CD8-positive, alpha-beta T cell (primary cell): ENCODE measurements at regions of chr6 and their contacts with region 1.

Region 1: DNA sequence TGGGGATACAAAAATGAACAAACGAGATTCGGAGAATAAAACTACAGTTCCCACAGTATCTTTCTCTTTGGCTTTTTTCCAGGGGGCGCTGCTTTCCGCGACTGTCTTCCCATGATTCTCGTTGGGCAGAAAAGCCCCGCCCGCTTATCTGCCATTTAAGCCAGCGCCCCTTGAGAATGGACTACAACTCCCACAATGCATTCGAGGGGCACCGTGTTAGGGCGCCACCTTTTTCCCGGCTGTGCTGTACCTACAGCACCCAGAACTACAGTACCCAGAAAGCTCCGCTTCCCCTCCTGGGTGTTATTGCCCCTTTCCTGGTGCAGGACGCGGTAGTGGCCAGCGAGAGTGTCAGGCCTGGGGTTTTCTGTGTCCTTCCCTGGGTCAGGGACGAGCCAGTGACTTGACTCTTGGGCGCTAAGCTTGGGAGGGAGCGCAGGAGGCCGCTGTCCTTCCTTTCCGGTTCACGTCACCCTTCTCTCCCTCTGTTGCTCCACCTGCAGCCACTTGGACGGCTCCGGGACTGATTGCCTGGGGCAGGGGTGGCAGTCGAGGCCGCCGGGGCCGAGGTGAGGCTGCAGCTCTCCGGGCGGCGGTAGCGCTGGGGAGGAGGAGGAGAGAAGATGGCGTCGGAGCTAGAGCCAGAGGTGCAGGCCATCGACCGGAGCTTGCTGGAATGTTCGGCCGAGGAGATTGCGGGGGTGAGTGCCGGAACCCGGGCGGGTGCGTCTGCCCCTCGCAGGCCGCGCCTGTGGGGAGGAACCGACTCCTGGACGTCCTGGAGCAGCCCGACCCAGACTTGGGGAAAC is at the start of gene UBR2:
- DNase-seq: peak; percentile 82 to 98 (median 91)
- ATAC-seq: peak; percentile 95
- H3K4me3 ChIP-seq: peak within 1 kb of the TSS; percentile 95 to 99
- H3K4me3 Mint-ChIP-seq: peak within 1 kb of the TSS; percentile 93
- H3K27ac ChIP-seq: peak within 1 kb of the TSS; percentile 91 to 96
- H3K27ac Mint-ChIP-seq: peak within 1 kb of the TSS; percentile 94
- H3K4me1 ChIP-seq: peaks cover 25% of the 10 kb centered on the region
- H3K4me1 Mint-ChIP-seq: peaks cover 35% of the 10 kb centered on the region
- H3K27me3 ChIP-seq: no peaks in the 10 kb centered on the region
- H3K27me3 Mint-ChIP-seq: peaks cover 2% of the 10 kb centered on the region
- CTCF ChIP-seq: peak; percentile 27
- total RNA-seq, gene UBR2: 22.0 to 22.8 TPM

Region 2: GRCh38 chr6:41787219-41787917 is 776.5 kb before region 1 on chr6 and contains the start of gene TOMM6:
- CTCF ChIA-PET with region 1: no interaction called
- POLR2A ChIA-PET with region 1: interaction called, 6 read pairs
- intact Hi-C with region 1: loop called (anchors 1 to 2 kb)
- DNase-seq: peak; percentile 90 to 97 (median 96)
- ATAC-seq: peak; percentile 78
- H3K4me3 ChIP-seq: peak within 1 kb of the TSS; percentile 80 to 96
- H3K4me3 Mint-ChIP-seq: peak within 1 kb of the TSS; percentile 97
- H3K27ac ChIP-seq: peak within 1 kb of the TSS; percentile 89 to 94
- H3K27ac Mint-ChIP-seq: peak within 1 kb of the TSS; percentile 99
- H3K4me1 ChIP-seq: peaks cover 6% of the 10 kb centered on the region
- H3K4me1 Mint-ChIP-seq: peaks cover 15% of the 10 kb centered on the region
- H3K27me3 ChIP-seq: no peaks in the 10 kb centered on the region
- H3K27me3 Mint-ChIP-seq: no peaks in the 10 kb centered on the region
- CTCF ChIP-seq: peak; percentile 78
- total RNA-seq, gene TOMM6: 94.3 to 101 TPM

Region 3: DNA sequence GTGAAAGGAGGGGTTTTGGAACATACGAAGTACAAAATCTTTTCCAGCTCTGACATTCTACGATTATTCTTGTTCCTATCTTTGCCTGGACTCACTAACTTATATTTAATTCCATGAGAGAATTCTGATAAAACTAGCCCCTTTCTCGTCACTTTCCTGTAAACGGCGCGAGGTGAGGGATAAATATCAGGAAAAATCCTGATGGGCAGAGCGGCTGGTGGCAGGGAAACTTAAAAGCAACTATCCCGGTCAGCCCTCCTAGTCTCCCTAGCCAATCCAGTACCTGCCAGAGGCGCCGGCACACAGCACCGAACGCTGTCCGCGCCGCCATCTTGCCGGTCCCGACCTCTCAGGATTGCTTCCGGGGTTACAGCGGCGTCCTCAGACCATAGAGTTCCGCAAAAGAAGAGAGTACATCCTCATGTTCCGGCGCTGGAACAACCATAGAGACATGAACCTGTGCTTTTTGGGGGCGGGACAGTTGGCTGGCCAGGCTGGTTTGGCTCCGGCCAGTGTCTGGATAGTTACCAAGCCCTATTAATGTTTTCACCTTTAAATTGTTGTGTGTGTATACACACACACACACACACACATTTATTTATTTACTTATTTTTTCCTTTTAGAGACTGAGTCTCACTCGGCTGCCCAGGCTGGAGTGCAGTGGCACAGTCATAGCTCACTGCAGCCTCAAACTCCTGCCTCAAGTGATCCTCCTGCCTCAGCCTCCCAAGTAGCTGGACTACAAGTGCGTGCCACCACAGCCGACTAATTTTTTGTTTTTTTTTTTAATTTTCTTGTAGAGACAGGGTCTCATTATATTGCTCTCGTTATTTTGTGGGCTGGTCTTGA is 346.2 kb before region 1 on chr6 and contains the start of gene MRPS10:
- CTCF ChIA-PET with region 1: no interaction called
- POLR2A ChIA-PET with region 1: no interaction called
- intact Hi-C with region 1: loop called (anchors 1 kb)
- DNase-seq: peak; percentile 81 to 95 (median 91)
- ATAC-seq: peak; percentile 99
- H3K4me3 ChIP-seq: peak within 1 kb of the TSS; percentile 70 to 93
- H3K4me3 Mint-ChIP-seq: peak within 1 kb of the TSS; percentile 99
- H3K27ac ChIP-seq: peak within 1 kb of the TSS; percentile 63 to 74
- H3K27ac Mint-ChIP-seq: peak within 1 kb of the TSS; percentile 97
- H3K4me1 ChIP-seq: peaks cover 8% of the 10 kb centered on the region
- H3K4me1 Mint-ChIP-seq: peaks cover 25% of the 10 kb centered on the region
- H3K27me3 ChIP-seq: no peaks in the 10 kb centered on the region
- H3K27me3 Mint-ChIP-seq: no peaks in the 10 kb centered on the region
- CTCF ChIP-seq: no peak
- total RNA-seq, gene MRPS10: 17.0 to 17.4 TPM

Region 4: GRCh38 chr6:42879372-42880239 is 315.7 kb after region 1 on chr6 and contains the start of gene RPL7L1:
- CTCF ChIA-PET with region 1: no interaction called
- POLR2A ChIA-PET with region 1: interaction called, 5 read pairs
- intact Hi-C with region 1: loop called (anchors 5 kb)
- DNase-seq: peak; percentile 69 to 93 (median 82)
- ATAC-seq: peak; percentile 92
- H3K4me3 ChIP-seq: peak within 1 kb of the TSS; percentile 71 to 83
- H3K4me3 Mint-ChIP-seq: peak within 1 kb of the TSS; percentile 98
- H3K27ac ChIP-seq: peak within 1 kb of the TSS; percentile 92 to 94
- H3K27ac Mint-ChIP-seq: peak within 1 kb of the TSS; percentile 99
- H3K4me1 ChIP-seq: peaks cover 19% of the 10 kb centered on the region
- H3K4me1 Mint-ChIP-seq: peaks cover 27% of the 10 kb centered on the region
- H3K27me3 ChIP-seq: no peaks in the 10 kb centered on the region
- H3K27me3 Mint-ChIP-seq: no peaks in the 10 kb centered on the region
- CTCF ChIP-seq: no peak
- total RNA-seq, gene RPL7L1: 67.9 to 68.6 TPM

Region 5: DNA sequence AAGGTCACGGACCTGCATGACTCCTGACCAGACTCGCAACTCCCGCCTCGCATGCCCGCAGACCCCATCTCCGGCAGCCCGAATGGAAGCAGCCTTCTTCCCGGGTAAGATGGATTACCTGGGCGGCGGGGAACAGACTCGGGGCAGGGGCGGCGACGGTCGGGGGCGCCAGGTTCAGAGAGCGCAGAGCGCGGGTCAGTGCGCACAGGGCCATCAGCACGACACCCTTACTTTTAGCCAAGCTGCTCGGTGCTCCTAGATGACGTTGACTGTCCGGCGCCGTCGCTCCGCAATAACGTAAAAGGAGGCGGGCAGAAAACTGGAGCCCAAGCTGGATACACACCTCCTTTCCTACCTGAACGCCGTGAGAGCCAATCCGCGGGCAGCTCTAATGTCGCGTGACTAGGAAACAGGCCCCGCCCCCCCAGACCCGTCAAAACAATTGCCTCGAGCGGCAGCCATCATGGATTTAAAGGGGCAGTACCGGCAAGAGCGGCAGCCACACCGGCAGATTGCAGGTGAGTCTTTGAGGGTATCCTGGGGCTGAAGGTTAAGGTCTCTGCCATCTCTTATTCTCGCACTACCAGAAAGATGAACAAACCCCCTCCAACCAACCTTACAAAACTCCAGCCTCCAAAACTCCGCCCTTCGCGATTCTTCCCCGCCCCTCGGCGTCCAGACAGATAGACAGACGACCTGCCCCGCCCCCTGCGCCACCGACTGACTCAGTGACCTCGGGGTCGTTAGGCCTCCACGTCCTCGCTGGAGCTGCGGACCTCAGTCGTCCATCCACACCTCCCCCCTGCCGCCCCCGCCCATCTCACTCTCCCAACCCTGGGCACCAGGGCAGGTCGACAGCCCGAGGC is 495.5 kb after region 1 on chr6 and contains the starts of genes KLC4 and MRPL2:
- CTCF ChIA-PET with region 1: no interaction called
- POLR2A ChIA-PET with region 1: no interaction called
- intact Hi-C with region 1: loop called (anchors 2 to 5 kb)
- DNase-seq: peak; percentile 94 to 99 (median 98)
- ATAC-seq: peak; percentile 97
- H3K4me3 ChIP-seq: peak within 1 kb of the TSS; percentile 81 to 96
- H3K4me3 Mint-ChIP-seq: peak within 1 kb of the TSS; percentile 95
- H3K27ac ChIP-seq: peak within 1 kb of the TSS; percentile 84 to 91
- H3K27ac Mint-ChIP-seq: peak within 1 kb of the TSS; percentile 99
- H3K4me1 ChIP-seq: peaks cover 19% of the 10 kb centered on the region
- H3K4me1 Mint-ChIP-seq: peaks cover 44% of the 10 kb centered on the region
- H3K27me3 ChIP-seq: no peaks in the 10 kb centered on the region
- H3K27me3 Mint-ChIP-seq: no peaks in the 10 kb centered on the region
- CTCF ChIP-seq: no peak
- total RNA-seq, gene KLC4: 42.1 to 57.4 TPM
- total RNA-seq, gene MRPL2: 38.9 to 41.6 TPM

Region 6: GRCh38 chr6:43575772-43576551 is 1012.1 kb after region 1 on chr6 and contains the starts of genes POLH and XPO5:
- CTCF ChIA-PET with region 1: no interaction called
- POLR2A ChIA-PET with region 1: no interaction called
- intact Hi-C with region 1: loop called in 1 of 2 experiments (anchors 5 kb)
- DNase-seq: peak; percentile 80 to 97 (median 90)
- ATAC-seq: peak; percentile 96
- H3K4me3 ChIP-seq: peak within 1 kb of the TSS; percentile 78 to 89
- H3K4me3 Mint-ChIP-seq: peak within 1 kb of the TSS; percentile 95
- H3K27ac ChIP-seq: peak within 1 kb of the TSS; percentile 55 to 66
- H3K27ac Mint-ChIP-seq: peak within 1 kb of the TSS; percentile 93
- H3K4me1 ChIP-seq: peaks cover 20% of the 10 kb centered on the region
- H3K4me1 Mint-ChIP-seq: peaks cover 36% of the 10 kb centered on the region
- H3K27me3 ChIP-seq: no peaks in the 10 kb centered on the region
- H3K27me3 Mint-ChIP-seq: no peaks in the 10 kb centered on the region
- CTCF ChIP-seq: no peak
- total RNA-seq, gene POLH: 3.4 to 3.7 TPM
- total RNA-seq, gene XPO5: 29.6 to 39.9 TPM